ENCODE measurements at regions of chr19 and their contacts with region 1.

Region 1: GRCh38 chr19:43765109-43765876 is 10.5 kb upstream of the SMG9 start:
- DNase-seq: peak; percentile 55
- ATAC-seq: peak; percentile 84
- H3K4me3 Mint-ChIP-seq: peak overlapping the region; percentile 76
- H3K27ac Mint-ChIP-seq: peak overlapping the region; percentile 94
- H3K4me1 Mint-ChIP-seq: peaks cover 68% of the 10 kb centered on the region
- H3K27me3 Mint-ChIP-seq: no peaks in the 10 kb centered on the region
- CTCF ChIP-seq: no peak

Region 2: GRCh38 chr19:43743022-43743421 is 22.3 kb before region 1 on chr19:
- CTCF ChIA-PET with region 1: interaction called, 50 read pairs
- POLR2A ChIA-PET with region 1: interaction called, 355 read pairs
- intact Hi-C with region 1: loop called (anchors 1 kb)
- DNase-seq: no peak
- ATAC-seq: no peak
- H3K4me3 Mint-ChIP-seq: no peak overlapping the region
- H3K27ac Mint-ChIP-seq: no peak overlapping the region
- H3K4me1 Mint-ChIP-seq: peaks cover 22% of the 10 kb centered on the region
- H3K27me3 Mint-ChIP-seq: no peaks in the 10 kb centered on the region
- CTCF ChIP-seq: no peak

Region 3: GRCh38 chr19:43777163-43777700 is 11.9 kb after region 1 on chr19:
- CTCF ChIA-PET with region 1: interaction called, 50 read pairs
- POLR2A ChIA-PET with region 1: interaction called, 661 read pairs
- intact Hi-C with region 1: loop called (anchors 1 kb)
- DNase-seq: no peak
- ATAC-seq: no peak
- H3K4me3 Mint-ChIP-seq: peak overlapping the region; percentile 88
- H3K27ac Mint-ChIP-seq: peak overlapping the region; percentile 94
- H3K4me1 Mint-ChIP-seq: peaks cover 68% of the 10 kb centered on the region
- H3K27me3 Mint-ChIP-seq: no peaks in the 10 kb centered on the region
- CTCF ChIP-seq: no peak